Left ventricle myocardium inferior (tissue), 1 donor: ENCODE measurements at regions of chr7 and their contacts with region 1.

Region 1: DNA sequence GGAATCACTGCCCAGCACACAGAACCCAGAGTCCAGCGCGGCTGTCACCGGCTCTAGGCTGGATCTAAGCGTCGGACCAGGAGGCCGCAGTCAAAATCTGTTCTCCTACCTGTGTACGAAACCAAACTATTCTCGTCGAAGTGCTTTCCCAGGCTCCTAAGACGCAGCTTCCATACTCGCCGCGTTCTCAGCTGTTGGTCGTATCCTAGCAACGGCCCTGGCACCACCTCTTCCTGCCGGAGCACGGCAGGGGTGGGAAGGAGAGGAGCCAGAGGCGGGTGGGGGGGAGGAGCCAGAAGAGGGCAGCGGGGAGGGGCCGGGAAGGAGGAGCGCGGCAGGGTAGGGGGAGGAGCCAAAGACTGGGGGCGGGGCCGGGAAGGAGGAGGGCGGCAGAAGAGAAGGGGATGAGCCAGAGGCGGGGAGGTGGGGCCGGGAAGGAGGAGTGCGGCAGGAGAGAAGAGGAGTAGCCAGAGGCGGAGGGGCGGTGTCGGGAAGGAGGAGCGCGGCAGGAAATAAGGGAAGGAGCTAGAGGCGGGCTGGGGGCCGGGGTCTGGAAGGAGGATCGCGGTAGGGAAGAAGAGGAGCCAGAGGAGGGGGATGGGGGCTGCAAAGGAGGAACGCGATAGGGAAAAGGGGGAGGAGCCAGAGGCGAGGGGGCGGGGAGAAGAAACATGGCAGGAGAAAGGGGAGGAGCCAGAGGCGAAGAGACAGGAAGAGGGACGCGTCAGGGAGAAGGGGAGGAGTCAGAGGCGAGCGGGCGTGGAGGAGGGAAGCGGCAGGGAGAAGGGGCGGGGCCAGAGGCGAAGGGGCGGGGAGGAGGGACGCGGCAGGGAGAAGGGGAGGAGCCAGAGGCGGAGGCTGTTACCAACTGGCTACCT is at the start of gene IQUB:
- DNase-seq: peak; percentile 99
- H3K4me3 ChIP-seq: peak within 1 kb of the TSS; percentile 78
- H3K27ac ChIP-seq: peak within 1 kb of the TSS; percentile 91
- H3K4me1 ChIP-seq: peaks cover 30% of the 10 kb centered on the region
- H3K27me3 ChIP-seq: no peaks in the 10 kb centered on the region
- CTCF ChIP-seq: no peak
- total RNA-seq, gene IQUB: 0.38 TPM

Region 2: DNA sequence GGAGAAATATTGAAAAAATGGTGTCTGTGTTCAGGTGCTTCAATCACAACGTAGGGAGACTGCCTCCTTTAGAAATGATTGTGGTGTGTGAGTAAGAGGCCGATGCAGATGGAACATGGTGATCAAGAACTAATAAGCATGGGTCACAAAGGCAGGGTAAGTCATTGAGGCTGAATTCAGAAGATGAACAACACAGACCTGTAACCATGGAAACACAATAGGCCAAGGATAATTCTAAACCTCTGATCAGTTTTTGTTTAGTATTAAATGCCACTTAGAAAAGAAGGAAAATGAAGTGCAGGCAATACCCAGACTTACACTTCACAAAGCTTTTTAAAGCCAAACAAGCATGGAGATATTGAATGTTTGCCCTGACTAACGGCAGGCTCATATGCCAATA is 506.3 kb before region 1 on chr7:
- intact Hi-C with region 1: no loop called
- DNase-seq: no peak
- H3K4me3 ChIP-seq: no peak overlapping the region
- H3K27ac ChIP-seq: no peak overlapping the region
- H3K4me1 ChIP-seq: no peaks in the 10 kb centered on the region
- H3K27me3 ChIP-seq: no peaks in the 10 kb centered on the region
- CTCF ChIP-seq: no peak

Region 3: DNA sequence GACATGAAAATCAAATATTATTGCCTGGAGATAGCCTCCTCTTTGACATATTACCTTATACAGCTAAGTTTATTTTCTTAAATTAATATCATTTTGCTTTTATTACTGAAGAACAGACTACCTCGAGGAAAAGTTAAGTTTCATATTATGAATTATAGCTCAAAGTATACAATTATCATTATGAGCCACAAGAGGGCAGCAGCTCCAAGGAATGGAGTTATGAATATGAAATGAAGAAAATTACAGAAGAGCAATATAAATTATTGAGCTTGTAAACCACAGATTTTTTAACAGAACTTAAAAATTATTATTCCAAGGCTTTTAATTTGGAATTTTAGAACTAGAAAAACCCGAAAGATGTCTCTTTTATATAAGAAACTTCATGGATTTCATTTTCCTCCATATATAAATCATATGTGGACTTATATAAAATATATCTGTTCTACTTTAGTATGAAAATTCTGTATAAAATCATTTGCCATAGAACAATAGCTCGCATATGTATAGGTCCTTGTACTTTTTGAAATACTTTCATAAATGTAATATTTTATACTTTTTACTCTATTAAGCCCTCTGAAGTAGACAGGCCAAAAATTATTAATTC is 40.3 kb before region 1 on chr7:
- intact Hi-C with region 1: loop called (anchors 5 kb)
- DNase-seq: no peak
- H3K4me3 ChIP-seq: no peak overlapping the region
- H3K27ac ChIP-seq: no peak overlapping the region
- H3K4me1 ChIP-seq: no peaks in the 10 kb centered on the region
- H3K27me3 ChIP-seq: no peaks in the 10 kb centered on the region
- CTCF ChIP-seq: peak; percentile 85

Region 4: GRCh38 chr7:123557398-123558288 is 23.0 kb after region 1 on chr7 and contains the start of gene NDUFA5:
- intact Hi-C with region 1: no loop called
- DNase-seq: peak; percentile 95
- H3K4me3 ChIP-seq: peak within 1 kb of the TSS; percentile 78
- H3K27ac ChIP-seq: peak within 1 kb of the TSS; percentile 93
- H3K4me1 ChIP-seq: peaks cover 55% of the 10 kb centered on the region
- H3K27me3 ChIP-seq: no peaks in the 10 kb centered on the region
- CTCF ChIP-seq: no peak
- total RNA-seq, gene NDUFA5: 378 TPM

Region 5: GRCh38 chr7:123570401-123571182 is 36.0 kb after region 1 on chr7:
- intact Hi-C with region 1: no loop called
- DNase-seq: no peak
- H3K4me3 ChIP-seq: no peak overlapping the region
- H3K27ac ChIP-seq: no peak overlapping the region
- H3K4me1 ChIP-seq: no peaks in the 10 kb centered on the region
- H3K27me3 ChIP-seq: no peaks in the 10 kb centered on the region
- CTCF ChIP-seq: no peak

Region 6: DNA sequence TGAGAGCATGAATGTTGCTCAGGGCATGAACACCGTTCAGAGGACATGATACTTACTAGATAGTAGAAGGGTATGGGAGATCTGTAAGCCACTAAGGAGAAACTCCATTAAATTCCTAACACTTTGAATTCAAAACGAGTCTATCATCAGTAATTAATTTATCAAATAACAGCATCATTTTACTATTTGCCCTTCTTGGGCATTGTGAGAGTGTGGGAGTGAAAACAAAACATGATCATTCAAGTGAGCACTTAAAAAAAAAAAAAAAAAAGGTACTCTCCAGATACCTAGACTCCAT is 46.5 kb after region 1 on chr7:
- intact Hi-C with region 1: no loop called
- DNase-seq: no peak
- H3K4me3 ChIP-seq: no peak overlapping the region
- H3K27ac ChIP-seq: no peak overlapping the region
- H3K4me1 ChIP-seq: peaks cover 10% of the 10 kb centered on the region
- H3K27me3 ChIP-seq: no peaks in the 10 kb centered on the region
- CTCF ChIP-seq: peak; percentile 5